Mucosa of descending colon (tissue), 3 donors: ENCODE measurements at regions of chr4 and their contacts with region 1.

Region 1: GRCh38 chr4:26325191-26325590 is 4.4 kb downstream of the RBPJ start:
- DNase-seq: peak in 1 of 3 donors; percentile 27
- ATAC-seq: no peak
- H3K4me3 ChIP-seq: no peak overlapping the region
- H3K4me1 ChIP-seq: peaks cover 3% of the 10 kb centered on the region
- CTCF ChIP-seq: no peak

Region 2: GRCh38 chr4:26116092-26116491 is 209.1 kb before region 1 on chr4:
- intact Hi-C with region 1: no loop called
- DNase-seq: no peak
- ATAC-seq: no peak
- H3K4me3 ChIP-seq: no peak overlapping the region
- H3K4me1 ChIP-seq: no peaks in the 10 kb centered on the region
- CTCF ChIP-seq: no peak

Region 3: DNA sequence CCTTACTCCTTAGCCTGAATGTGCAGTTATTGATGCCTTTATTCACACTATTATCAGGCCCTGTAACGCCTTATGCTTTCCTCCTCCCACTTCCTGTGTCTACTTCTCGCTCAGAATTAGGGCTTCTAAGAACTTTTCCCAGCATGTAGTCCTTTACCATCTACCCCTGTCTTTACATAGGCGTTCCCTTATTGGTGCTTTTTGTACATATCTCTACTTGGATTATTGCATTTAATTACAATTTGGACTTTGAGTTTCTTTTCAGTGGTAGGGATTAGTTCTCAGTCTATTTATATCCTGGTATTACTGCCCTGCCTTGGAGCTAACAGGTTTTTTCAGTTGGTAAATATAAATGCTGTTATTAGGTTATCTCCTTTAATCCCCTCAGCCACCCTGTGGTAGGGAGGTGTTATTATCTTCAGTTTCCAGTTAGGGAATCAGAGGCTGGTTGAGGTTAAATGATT is 79.6 kb after region 1 on chr4:
- intact Hi-C with region 1: loop called in 1 of 2 experiments (anchors 5 kb)
- DNase-seq: no peak
- ATAC-seq: no peak
- H3K4me3 ChIP-seq: no peak overlapping the region
- H3K4me1 ChIP-seq: no peaks in the 10 kb centered on the region
- CTCF ChIP-seq: no peak

Region 4: DNA sequence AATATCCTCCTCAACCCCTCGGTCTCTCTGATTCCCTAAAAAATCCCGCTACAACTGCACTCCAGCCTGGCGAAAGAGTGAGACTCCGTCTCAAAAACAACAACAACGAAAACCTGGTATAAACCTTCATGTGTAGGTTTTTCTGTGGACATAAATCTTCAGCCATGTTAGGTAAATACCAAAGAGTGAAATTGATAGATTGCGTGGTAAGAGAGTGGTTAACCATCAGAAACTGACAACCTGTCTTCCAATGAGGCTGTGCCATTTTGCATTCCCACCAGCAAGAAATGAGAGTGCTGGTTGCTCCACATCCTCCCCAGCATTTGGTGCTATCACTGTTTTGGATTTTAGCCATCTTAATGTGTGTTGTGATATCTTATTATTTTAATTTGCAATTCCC is 269.6 kb after region 1 on chr4:
- intact Hi-C with region 1: no loop called
- DNase-seq: no peak
- ATAC-seq: no peak
- H3K4me3 ChIP-seq: no peak overlapping the region
- H3K4me1 ChIP-seq: no peaks in the 10 kb centered on the region
- CTCF ChIP-seq: no peak